ENCODE measurements at regions of chr17 and their contacts with region 1.

Region 1: GRCh38 chr17:50129728-50130558 is at the start of gene SAMD14:
- DNase-seq: peak; percentile 49 to 76
- ATAC-seq: peak; percentile 69 to 73 (median 73)
- H3K4me3 ChIP-seq: peak within 1 kb of the TSS; percentile 36
- H3K4me3 Mint-ChIP-seq: peak within 1 kb of the TSS; percentile 85
- H3K27ac ChIP-seq: no peak within 1 kb of the TSS
- H3K27ac Mint-ChIP-seq: peak within 1 kb of the TSS; percentile 70 to 75
- H3K4me1 ChIP-seq: peaks cover 40% of the 10 kb centered on the region
- H3K4me1 Mint-ChIP-seq: peaks cover 21 to 41% of the 10 kb centered on the region in 2 donors
- H3K27me3 ChIP-seq: peaks cover 12% of the 10 kb centered on the region
- H3K27me3 Mint-ChIP-seq: peaks cover 6 to 13% of the 10 kb centered on the region in 2 donors
- CTCF ChIP-seq: no peak
- total RNA-seq, gene SAMD14: 1.1 to 2.1 (median 1.5) TPM

Region 2: DNA sequence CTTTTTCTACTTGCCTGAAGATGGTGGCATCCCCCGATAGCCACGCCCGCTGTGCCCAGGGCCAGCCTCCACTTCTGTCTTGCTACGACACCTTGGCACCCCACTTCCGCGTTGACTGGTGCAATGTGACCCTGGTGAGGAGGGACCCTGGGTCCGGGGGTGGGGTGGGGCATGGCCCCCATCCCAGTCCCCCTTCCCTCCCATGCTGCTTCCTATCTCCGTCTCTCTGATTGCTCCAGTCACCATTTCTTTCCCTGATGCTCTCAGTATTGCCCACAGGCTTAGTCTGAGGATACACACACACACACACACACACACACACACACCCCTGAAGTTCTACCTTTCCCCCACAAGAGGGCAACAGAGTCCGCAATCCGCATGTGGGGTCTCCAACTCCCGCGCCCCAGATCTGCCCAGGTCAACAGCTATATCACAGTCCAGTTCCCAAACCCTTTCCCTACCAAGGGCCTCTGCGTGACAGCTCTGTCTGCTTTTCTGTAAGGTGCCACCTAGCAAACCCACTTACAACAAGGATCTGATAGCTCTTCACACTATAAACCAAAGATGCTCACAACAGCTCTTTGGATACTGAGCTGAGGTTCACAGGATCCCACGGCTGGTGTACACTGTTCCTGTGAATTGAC is 39.3 kb after region 1 on chr17:
- intact Hi-C with region 1: loop called (anchors 5 kb)
- DNase-seq: peak; percentile 47 to 81
- ATAC-seq: peak; percentile 85 to 90 (median 86)
- H3K4me3 ChIP-seq: peak overlapping the region; percentile 7
- H3K4me3 Mint-ChIP-seq: peak overlapping the region; percentile 49
- H3K27ac ChIP-seq: peak overlapping the region; percentile 43
- H3K27ac Mint-ChIP-seq: peak overlapping the region; percentile 73 to 74
- H3K4me1 ChIP-seq: peaks cover 17% of the 10 kb centered on the region
- H3K4me1 Mint-ChIP-seq: peaks cover 12% of the 10 kb centered on the region in 2 donors
- H3K27me3 ChIP-seq: no peaks in the 10 kb centered on the region
- H3K27me3 Mint-ChIP-seq: peaks cover 0 to 8% of the 10 kb centered on the region in 2 donors
- CTCF ChIP-seq: no peak

Region 3: GRCh38 chr17:50297407-50297865 is 167.5 kb after region 1 on chr17:
- intact Hi-C with region 1: loop called (anchors 10 kb)
- DNase-seq: peak; percentile 66 to 86
- ATAC-seq: peak; percentile 89 to 98 (median 97)
- H3K4me3 ChIP-seq: no peak overlapping the region
- H3K4me3 Mint-ChIP-seq: no peak overlapping the region
- H3K27ac ChIP-seq: no peak overlapping the region
- H3K27ac Mint-ChIP-seq: no peak overlapping the region
- H3K4me1 ChIP-seq: no peaks in the 10 kb centered on the region
- H3K4me1 Mint-ChIP-seq: peaks cover 2% of the 10 kb centered on the region in 2 donors
- H3K27me3 ChIP-seq: peaks cover 2% of the 10 kb centered on the region
- H3K27me3 Mint-ChIP-seq: peaks cover 2 to 16% of the 10 kb centered on the region in 2 donors
- CTCF ChIP-seq: peak; percentile 78